Transverse colon (tissue), 4 donors: ENCODE measurements at regions of chr6 and their contacts with region 1.

Region 1: GRCh38 chr6:136901212-136901784 is 20.8 kb upstream of the SLC35D3 start:
- DNase-seq: no peak
- H3K4me3 ChIP-seq: no peak overlapping the region
- H3K27ac ChIP-seq: no peak overlapping the region
- H3K4me1 ChIP-seq: no peaks in the 10 kb centered on the region
- H3K27me3 ChIP-seq: no peaks in the 10 kb centered on the region
- CTCF ChIP-seq: no peak
- EP300 ChIP-seq: no peak
- POLR2A ChIP-seq: no peak

Region 2: DNA sequence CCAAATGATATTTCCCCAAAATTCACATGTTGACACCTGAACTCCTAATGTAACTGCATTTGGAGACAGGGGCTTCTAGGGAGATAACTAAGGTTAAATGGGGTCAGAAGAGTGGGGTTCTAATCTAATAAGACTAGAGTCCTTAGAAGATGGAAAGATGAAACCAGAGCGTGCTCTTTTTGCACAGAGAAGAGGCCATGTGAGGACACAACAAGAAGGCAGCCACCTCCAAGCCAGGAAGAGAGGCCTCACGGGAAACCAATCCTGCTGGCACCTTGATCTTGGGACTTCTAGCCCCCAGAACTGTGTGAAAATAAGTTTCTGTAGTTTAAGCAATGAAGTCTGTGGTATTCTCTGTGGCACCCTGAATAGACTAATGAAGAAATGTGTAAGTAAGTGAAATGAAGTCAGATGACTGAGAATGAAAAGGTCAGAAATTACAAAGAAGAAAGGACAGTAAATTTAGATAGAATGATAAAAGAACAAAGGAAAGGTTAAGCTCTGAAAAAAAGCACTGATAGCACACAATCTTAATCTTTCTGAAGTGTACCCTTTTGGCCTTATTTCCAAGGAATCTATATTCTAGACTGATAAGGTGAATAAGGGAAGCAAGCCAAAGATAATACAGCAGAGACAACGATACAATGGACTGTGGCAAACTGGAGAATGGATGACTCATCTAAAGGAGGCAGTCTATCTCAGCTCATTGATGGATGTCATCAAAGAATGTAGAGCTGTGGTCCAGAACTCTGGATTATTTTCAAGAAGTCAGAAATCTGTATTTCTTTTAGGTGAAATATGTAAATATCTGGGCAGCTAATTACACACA is 1609.8 kb before region 1 on chr6:
- in situ Hi-C with region 1: no loop called
- intact Hi-C with region 1: loop called (anchors 5 kb)
- DNase-seq: no peak
- H3K4me3 ChIP-seq: no peak overlapping the region
- H3K27ac ChIP-seq: no peak overlapping the region
- H3K4me1 ChIP-seq: no peaks in the 10 kb centered on the region
- H3K27me3 ChIP-seq: no peaks in the 10 kb centered on the region
- CTCF ChIP-seq: no peak
- EP300 ChIP-seq: no peak
- POLR2A ChIP-seq: no peak

Region 3: DNA sequence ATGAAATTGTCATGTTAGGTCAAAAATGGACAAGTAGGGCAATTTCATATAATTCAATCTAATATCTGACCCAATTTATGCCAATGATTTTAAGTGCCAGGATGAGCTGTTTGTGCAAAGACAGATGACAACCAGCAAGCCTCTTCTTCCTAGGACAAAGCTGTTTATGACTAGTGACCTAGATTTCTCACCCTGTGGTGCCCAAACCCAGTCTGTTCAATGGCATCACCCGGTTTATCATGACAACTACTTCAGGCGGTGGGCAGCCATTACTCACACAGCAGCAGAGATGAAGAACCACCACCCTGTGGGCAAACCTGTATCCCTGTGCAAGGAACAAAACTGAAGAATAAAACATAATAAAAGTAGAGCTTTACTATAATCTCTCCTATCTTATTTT is 410.0 kb before region 1 on chr6:
- in situ Hi-C with region 1: no loop called
- intact Hi-C with region 1: no loop called
- DNase-seq: no peak
- H3K4me3 ChIP-seq: no peak overlapping the region
- H3K27ac ChIP-seq: no peak overlapping the region
- H3K4me1 ChIP-seq: no peaks in the 10 kb centered on the region
- H3K27me3 ChIP-seq: no peaks in the 10 kb centered on the region
- CTCF ChIP-seq: no peak
- EP300 ChIP-seq: no peak
- POLR2A ChIP-seq: no peak

Region 4: GRCh38 chr6:136823128-136823660 is 78.1 kb before region 1 on chr6:
- in situ Hi-C with region 1: no loop called
- intact Hi-C with region 1: no loop called
- DNase-seq: no peak
- H3K4me3 ChIP-seq: peak overlapping the region; percentile 43 to 83 (median 78)
- H3K27ac ChIP-seq: peak overlapping the region; percentile 90 to 95 (median 94)
- H3K4me1 ChIP-seq: peaks cover 0 to 11% (median 4%) of the 10 kb centered on the region in 4 donors
- H3K27me3 ChIP-seq: no peaks in the 10 kb centered on the region
- CTCF ChIP-seq: no peak
- EP300 ChIP-seq: no peak
- POLR2A ChIP-seq: no peak

Region 5: DNA sequence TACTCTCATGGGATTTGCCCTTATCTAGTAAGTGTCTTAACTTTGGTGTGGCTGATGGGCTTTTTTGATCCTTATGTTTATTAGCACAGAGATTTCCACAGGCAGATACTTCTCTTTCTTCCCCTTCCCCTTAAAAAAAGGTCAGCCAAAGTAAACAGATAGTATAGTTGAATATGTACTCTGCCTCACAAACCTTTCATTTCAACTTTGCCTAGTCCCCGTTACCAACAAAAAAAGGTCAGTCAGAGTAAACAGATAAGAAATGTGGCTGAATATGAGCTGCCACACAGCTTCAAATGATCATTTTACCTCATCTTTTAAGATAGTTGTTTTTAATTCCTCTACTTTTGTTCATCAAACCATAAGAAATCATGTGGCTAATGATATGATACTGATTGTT is 13.3 kb before region 1 on chr6:
- in situ Hi-C with region 1: no loop called
- intact Hi-C with region 1: loop called (anchors 1 kb)
- DNase-seq: no peak
- H3K4me3 ChIP-seq: no peak overlapping the region
- H3K27ac ChIP-seq: no peak overlapping the region
- H3K4me1 ChIP-seq: peaks cover 0 to 10% (median 6%) of the 10 kb centered on the region in 4 donors
- H3K27me3 ChIP-seq: no peaks in the 10 kb centered on the region
- CTCF ChIP-seq: no peak
- EP300 ChIP-seq: no peak
- POLR2A ChIP-seq: no peak

Region 6: DNA sequence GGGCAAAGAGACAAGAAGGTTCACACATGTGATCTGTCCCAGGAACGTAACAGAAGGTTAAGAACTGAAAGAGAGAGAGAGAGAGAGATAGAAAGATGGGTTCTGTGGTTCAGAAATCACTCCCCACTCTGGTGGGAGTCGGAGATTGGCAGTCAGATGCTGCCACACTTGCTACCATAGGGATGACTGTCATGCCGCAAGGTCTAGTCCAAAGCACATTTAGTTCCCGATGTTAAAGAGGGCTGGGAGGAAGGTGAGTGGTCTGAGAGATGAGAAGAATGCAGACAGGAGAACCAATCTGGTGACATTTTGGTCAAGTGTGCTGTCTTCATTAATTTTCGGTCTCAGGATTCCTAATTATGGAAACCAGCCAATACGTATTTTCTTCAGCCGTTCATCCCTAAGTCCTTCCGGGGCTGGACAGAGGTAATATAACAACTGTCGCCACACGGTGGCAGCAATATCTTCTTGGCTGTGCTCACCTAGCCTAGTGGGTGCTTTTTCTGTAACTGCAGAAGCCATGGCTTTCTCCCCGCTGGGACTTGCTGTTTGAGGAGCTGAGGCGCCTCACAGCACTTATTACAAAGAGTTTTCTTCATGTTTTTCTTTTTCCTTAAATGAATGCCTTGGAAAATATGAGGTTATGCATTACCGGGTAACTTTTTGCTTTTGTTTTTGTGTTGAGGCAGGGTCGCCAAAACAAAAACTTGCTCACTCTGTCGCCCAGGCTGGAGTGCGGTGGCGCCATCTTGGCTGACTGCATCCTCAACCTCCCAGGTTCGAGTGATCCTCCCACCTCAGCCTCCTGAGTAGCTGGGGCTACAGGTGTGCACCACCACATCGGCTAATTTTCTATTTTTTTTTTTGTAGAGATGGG is 66.8 kb after region 1 on chr6:
- in situ Hi-C with region 1: no loop called
- intact Hi-C with region 1: no loop called
- DNase-seq: peak; percentile 80
- H3K4me3 ChIP-seq: no peak overlapping the region
- H3K27ac ChIP-seq: peak overlapping the region in 1 of 4 donors; percentile 34
- H3K4me1 ChIP-seq: peaks cover 0 to 33% (median 16%) of the 10 kb centered on the region in 4 donors
- H3K27me3 ChIP-seq: no peaks in the 10 kb centered on the region
- CTCF ChIP-seq: peak; percentile 58 to 70 (median 64)
- EP300 ChIP-seq: no peak
- POLR2A ChIP-seq: no peak

Region 7: DNA sequence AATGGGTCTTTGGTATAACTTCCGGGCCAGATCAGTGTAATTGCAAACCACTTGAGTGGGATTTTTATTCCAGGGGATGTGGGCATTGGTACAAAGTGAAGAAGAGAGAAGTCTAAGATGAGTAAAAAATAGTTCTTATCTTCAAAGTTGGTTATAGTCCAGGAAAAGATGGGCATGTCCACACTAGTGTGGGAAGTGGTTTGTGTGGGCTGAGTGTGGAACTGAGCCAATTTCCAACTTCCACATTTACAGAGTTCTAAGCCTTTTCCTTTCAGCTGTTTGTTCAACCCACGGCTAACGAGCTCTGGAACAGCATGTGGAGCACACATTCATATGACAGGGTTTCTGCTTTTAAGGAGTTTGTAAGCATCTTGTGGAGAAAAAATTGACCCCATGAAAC is 390.1 kb after region 1 on chr6:
- in situ Hi-C with region 1: no loop called
- intact Hi-C with region 1: no loop called
- DNase-seq: peak; percentile 42
- H3K4me3 ChIP-seq: no peak overlapping the region
- H3K27ac ChIP-seq: no peak overlapping the region
- H3K4me1 ChIP-seq: no peaks in the 10 kb centered on the region
- H3K27me3 ChIP-seq: no peaks in the 10 kb centered on the region
- CTCF ChIP-seq: no peak
- EP300 ChIP-seq: no peak
- POLR2A ChIP-seq: no peak